GM12878 (cell line): ENCODE measurements at regions of chr2 and their contacts with region 1.

Region 1: GRCh38 chr2:199488772-199489400 is 31.1 kb upstream of the SATB2 start:
- DNase-seq: no peak
- ATAC-seq: peak; percentile 73
- H3K4me3 ChIP-seq: no peak overlapping the region
- H3K27ac ChIP-seq: no peak overlapping the region
- H3K4me1 ChIP-seq: no peaks in the 10 kb centered on the region
- H3K27me3 ChIP-seq: no peaks in the 10 kb centered on the region
- CTCF ChIP-seq: peak; percentile 72 to 90 (median 83)
- EP300 ChIP-seq: no peak
- POLR2A ChIP-seq: no peak
- RAD21 ChIP-seq: peak; percentile 72

Region 2: GRCh38 chr2:198374375-198375082 is 1114.4 kb before region 1 on chr2:
- CTCF ChIA-PET with region 1: interaction called, 17 read pairs
- POLR2A ChIA-PET with region 1: no interaction called
- RAD21 ChIA-PET with region 1: interaction called, 12 read pairs
- SMC1A ChIA-PET with region 1: interaction called, 17 read pairs
- in situ Hi-C with region 1: no loop called
- intact Hi-C with region 1: loop called (anchors 5 kb)
- DNase-seq: no peak
- ATAC-seq: no peak
- H3K4me3 ChIP-seq: no peak overlapping the region
- H3K27ac ChIP-seq: no peak overlapping the region
- H3K4me1 ChIP-seq: peaks cover 9% of the 10 kb centered on the region
- H3K27me3 ChIP-seq: peaks cover under 1 to 6% of the 10 kb centered on the region in 2 experiments; a peak in 2 of 4 replicates
- CTCF ChIP-seq: peak; percentile 52 to 70 (median 55); a peak in 5 of 6 replicates
- EP300 ChIP-seq: no peak
- POLR2A ChIP-seq: no peak
- RAD21 ChIP-seq: peak; percentile 73

Region 3: GRCh38 chr2:198930170-198930569 is 558.7 kb before region 1 on chr2:
- CTCF ChIA-PET with region 1: no interaction called
- POLR2A ChIA-PET with region 1: no interaction called
- RAD21 ChIA-PET with region 1: no interaction called
- SMC1A ChIA-PET with region 1: no interaction called
- in situ Hi-C with region 1: no loop called
- intact Hi-C with region 1: loop called (anchors 10 kb)
- DNase-seq: no peak
- ATAC-seq: 0 out of 3 replicates have a peak, but pooled peaks have one; percentile 14
- H3K4me3 ChIP-seq: no peak overlapping the region
- H3K27ac ChIP-seq: no peak overlapping the region
- H3K4me1 ChIP-seq: no peaks in the 10 kb centered on the region
- H3K27me3 ChIP-seq: 0 out of 4 replicates have a peak, but pooled peaks cover 0 to 3% of the 10 kb centered on the region in 2 experiments
- CTCF ChIP-seq: peak in 2 of 3 experiments; percentile 12 to 21; a peak in 1 of 6 replicates
- EP300 ChIP-seq: no peak
- POLR2A ChIP-seq: no peak
- RAD21 ChIP-seq: 0 out of 2 replicates have a peak, but pooled peaks have one; percentile 20

Region 4: GRCh38 chr2:199414465-199414864 is 74.4 kb before region 1 on chr2:
- CTCF ChIA-PET with region 1: no interaction called
- POLR2A ChIA-PET with region 1: no interaction called
- RAD21 ChIA-PET with region 1: no interaction called
- SMC1A ChIA-PET with region 1: no interaction called
- in situ Hi-C with region 1: no loop called
- intact Hi-C with region 1: no loop called
- DNase-seq: no peak
- ATAC-seq: no peak
- H3K4me3 ChIP-seq: no peak overlapping the region
- H3K27ac ChIP-seq: no peak overlapping the region
- H3K4me1 ChIP-seq: no peaks in the 10 kb centered on the region
- H3K27me3 ChIP-seq: no peaks in the 10 kb centered on the region; a peak in 1 of 4 replicates
- CTCF ChIP-seq: no peak
- EP300 ChIP-seq: no peak
- POLR2A ChIP-seq: no peak
- RAD21 ChIP-seq: no peak

Region 5: GRCh38 chr2:199477277-199477834 is 11.5 kb before region 1 on chr2:
- CTCF ChIA-PET with region 1: interaction called, 19 read pairs
- POLR2A ChIA-PET with region 1: no interaction called
- RAD21 ChIA-PET with region 1: no interaction called
- SMC1A ChIA-PET with region 1: interaction called, 3 read pairs
- in situ Hi-C with region 1: no loop called
- intact Hi-C with region 1: no loop called
- DNase-seq: no peak
- ATAC-seq: no peak
- H3K4me3 ChIP-seq: no peak overlapping the region
- H3K27ac ChIP-seq: no peak overlapping the region
- H3K4me1 ChIP-seq: no peaks in the 10 kb centered on the region
- H3K27me3 ChIP-seq: peaks cover 2% of the 10 kb centered on the region in 2 experiments; a peak in 1 of 4 replicates
- CTCF ChIP-seq: no peak
- EP300 ChIP-seq: no peak
- POLR2A ChIP-seq: no peak
- RAD21 ChIP-seq: no peak